Heart left ventricle (tissue), 16 donors: ENCODE measurements at regions of chr7 and their contacts with region 1.

Region 1: DNA sequence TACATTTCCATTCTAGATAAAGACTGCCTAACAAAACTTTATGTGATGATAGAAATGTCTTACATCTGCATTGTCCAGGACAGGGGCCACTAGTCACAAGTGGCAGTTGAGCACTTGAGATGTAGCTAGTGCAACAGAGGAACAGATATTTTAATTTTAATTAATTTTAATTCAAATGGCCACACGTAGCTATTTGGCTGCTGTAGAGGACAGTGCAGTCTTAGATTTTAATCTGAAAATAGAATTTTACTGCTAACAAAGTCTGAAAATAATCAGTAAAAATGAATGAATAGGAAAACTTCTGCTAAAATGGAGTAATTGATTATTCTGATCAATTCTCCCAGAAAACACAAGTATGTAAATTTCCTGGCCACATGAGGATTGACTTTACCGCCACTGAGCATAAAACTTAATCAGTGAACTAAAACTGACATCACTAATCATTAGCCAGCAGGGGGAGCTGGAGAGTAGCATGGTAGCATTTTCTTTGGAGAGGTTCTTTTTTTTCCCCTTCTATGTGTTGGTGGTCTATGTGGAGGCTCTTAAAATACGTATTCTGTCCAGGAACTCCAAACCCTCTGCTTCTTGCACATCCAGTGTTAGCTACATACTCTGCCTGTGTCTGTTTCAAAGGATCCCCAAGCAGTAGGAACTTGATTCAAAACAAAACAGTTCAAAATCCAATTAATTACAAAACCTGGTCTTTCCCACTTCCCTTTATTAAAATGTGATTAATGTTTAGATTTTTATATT is 52.1 kb downstream of the TSPAN12 start:
- DNase-seq: peak in 4 of 5 donors; percentile 30 to 56 (median 48)
- ATAC-seq: peak in 1 of 4 donors; percentile 75
- H3K4me3 ChIP-seq: no peak overlapping the region
- H3K27ac ChIP-seq: no peak overlapping the region
- H3K4me1 ChIP-seq: peaks cover 0 to 26% (median 1%) of the 10 kb centered on the region in 12 donors
- H3K27me3 ChIP-seq: no peaks in the 10 kb centered on the region
- CTCF ChIP-seq: peak; percentile 82 to 93 (median 89)
- POLR2A ChIP-seq: no peak

Region 2: DNA sequence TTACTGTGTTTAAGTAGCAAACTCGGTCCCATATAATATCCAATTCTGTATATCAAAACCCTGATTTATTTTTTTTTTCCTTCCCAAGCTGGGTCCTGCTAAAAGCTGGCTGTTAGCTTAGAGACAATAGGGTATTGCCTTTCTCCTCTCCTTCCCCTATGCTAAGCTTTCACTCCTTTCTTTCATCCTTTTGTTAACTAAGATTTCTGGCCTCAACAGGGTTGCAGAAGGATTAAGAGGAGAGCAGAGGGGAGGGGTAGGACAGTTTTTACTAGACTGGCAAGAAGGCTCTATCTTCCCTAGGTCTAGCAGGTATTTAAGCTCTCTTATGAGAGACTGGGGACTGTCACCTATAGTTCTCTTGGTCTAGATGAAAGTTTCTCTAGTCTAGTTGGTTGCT is 303.7 kb before region 1 on chr7:
- intact Hi-C with region 1: no loop called
- DNase-seq: no peak
- ATAC-seq: no peak
- H3K4me3 ChIP-seq: no peak overlapping the region
- H3K27ac ChIP-seq: no peak overlapping the region
- H3K4me1 ChIP-seq: no peaks in the 10 kb centered on the region
- H3K27me3 ChIP-seq: peaks cover 0 to under 1% (median 0%) of the 10 kb centered on the region in 9 donors
- CTCF ChIP-seq: no peak
- POLR2A ChIP-seq: no peak

Region 3: GRCh38 chr7:120941064-120941463 is 135.3 kb after region 1 on chr7:
- intact Hi-C with region 1: loop called (anchors 2 to 5 kb)
- DNase-seq: no peak
- ATAC-seq: peak in 1 of 4 donors; percentile 50
- H3K4me3 ChIP-seq: no peak overlapping the region
- H3K27ac ChIP-seq: no peak overlapping the region
- H3K4me1 ChIP-seq: peaks cover 0 to 8% (median 0%) of the 10 kb centered on the region in 12 donors
- H3K27me3 ChIP-seq: no peaks in the 10 kb centered on the region
- CTCF ChIP-seq: peak in 9 of 12 donors; percentile 15 to 59 (median 53)
- POLR2A ChIP-seq: no peak

Region 4: DNA sequence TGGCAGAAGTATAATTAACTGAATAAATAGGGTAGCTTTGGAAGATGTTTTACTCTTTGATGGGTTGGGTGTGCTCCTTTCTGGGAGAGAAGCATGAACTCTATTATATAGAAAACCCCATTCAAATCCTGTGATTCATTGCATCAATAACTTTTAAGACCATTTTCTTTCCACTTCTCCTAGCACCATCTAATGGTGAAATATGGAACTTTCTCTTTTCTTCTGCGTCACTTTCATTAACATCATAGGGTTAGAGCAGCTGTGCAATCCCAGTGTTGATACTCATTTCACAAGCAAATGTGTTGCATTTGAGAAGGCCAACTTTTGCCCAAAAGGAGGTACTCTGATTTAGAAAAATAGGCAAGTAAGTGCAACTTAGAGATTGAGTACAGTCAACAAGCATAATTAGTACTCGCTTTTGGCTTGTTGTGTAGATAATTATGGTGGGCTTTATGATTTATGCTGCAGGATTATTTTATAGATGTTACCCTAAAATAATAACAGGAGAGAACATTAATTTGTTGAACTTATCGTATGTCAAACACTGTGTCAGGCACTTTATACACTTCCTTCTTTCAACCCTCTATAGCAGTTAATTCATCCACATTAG is 275.6 kb after region 1 on chr7:
- intact Hi-C with region 1: loop called in 1 of 10 experiments (anchors 5 kb)
- DNase-seq: no peak
- ATAC-seq: peak in 3 of 4 donors; percentile 36 to 62 (median 62)
- H3K4me3 ChIP-seq: no peak overlapping the region
- H3K27ac ChIP-seq: peak overlapping the region in 8 of 12 donors; percentile 13 to 83 (median 46)
- H3K4me1 ChIP-seq: peaks cover 0 to 53% (median 29%) of the 10 kb centered on the region in 12 donors
- H3K27me3 ChIP-seq: no peaks in the 10 kb centered on the region
- CTCF ChIP-seq: peak; percentile 64 to 81 (median 76)
- POLR2A ChIP-seq: no peak

Region 5: GRCh38 chr7:121102619-121103018 is 296.8 kb after region 1 on chr7:
- intact Hi-C with region 1: loop called in 2 of 10 experiments (anchors 5 to 10 kb)
- DNase-seq: no peak
- ATAC-seq: peak in 2 of 4 donors; percentile 9 to 24
- H3K4me3 ChIP-seq: no peak overlapping the region
- H3K27ac ChIP-seq: peak overlapping the region in 7 of 12 donors; percentile 13 to 59 (median 51)
- H3K4me1 ChIP-seq: peaks cover 0 to 31% (median 10%) of the 10 kb centered on the region in 12 donors
- H3K27me3 ChIP-seq: no peaks in the 10 kb centered on the region
- CTCF ChIP-seq: no peak
- POLR2A ChIP-seq: no peak

Region 6: DNA sequence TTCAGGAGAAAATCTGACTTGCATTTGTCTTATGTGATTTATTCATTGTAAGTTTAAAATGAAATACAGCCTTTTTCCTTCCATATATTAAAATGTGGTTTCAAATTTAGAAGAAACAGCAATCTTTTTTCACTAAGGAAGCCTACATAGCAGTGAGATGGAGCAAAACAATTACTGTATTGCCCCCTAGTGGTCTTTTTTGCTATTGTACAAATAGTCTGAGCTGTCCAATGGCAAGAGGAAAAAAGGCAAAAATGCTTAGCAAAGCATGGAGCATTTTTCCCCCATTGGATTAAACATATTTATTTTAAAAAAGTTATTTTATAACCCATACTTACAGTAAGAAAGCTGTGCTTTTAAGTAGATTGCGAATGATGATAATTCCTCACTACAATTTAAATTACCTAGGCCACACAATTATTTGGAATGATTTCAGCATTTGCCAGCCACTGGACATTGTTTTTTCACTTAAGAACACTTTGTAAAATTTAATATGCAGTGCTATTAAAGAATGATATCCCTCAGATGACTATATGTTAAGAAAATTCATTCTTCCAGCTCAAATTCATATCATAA is 302.2 kb after region 1 on chr7:
- intact Hi-C with region 1: loop called in 2 of 10 experiments (anchors 5 to 10 kb)
- DNase-seq: no peak
- ATAC-seq: peak; percentile 51 to 84 (median 76)
- H3K4me3 ChIP-seq: no peak overlapping the region
- H3K27ac ChIP-seq: no peak overlapping the region
- H3K4me1 ChIP-seq: peaks cover 0 to 24% (median 7%) of the 10 kb centered on the region in 12 donors
- H3K27me3 ChIP-seq: no peaks in the 10 kb centered on the region
- CTCF ChIP-seq: peak; percentile 70 to 91 (median 84)
- POLR2A ChIP-seq: no peak